ENCODE measurements at regions of chr4 and their contacts with region 1.

Region 1: DNA sequence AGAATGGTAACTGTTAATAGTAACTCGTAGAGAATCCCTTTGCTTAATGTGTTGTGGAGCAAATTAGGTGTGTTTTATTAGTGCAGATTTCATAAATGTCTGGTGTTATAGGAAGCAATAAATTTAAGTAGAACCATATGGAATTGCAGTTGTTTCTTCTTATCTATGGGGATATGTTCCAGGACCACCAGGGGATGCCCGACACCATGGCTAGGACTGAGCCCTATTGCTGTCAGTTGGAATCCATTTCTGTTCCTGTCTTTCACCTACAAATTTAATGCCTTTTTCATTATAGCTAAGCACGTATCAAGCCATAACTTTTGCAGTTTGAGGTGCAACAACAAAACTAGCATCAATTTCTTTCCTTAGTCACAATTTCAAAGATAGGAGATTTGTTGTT is 72.5 kb downstream of the DDIT4L start:
- DNase-seq: peak; percentile 41
- H3K4me3 ChIP-seq: no peak overlapping the region
- H3K27ac ChIP-seq: no peak overlapping the region
- H3K4me1 ChIP-seq: peaks cover 0 to 8% of the 10 kb centered on the region in 2 experiments; a peak in 2 of 4 replicates
- H3K27me3 ChIP-seq: no peaks in the 10 kb centered on the region
- CTCF ChIP-seq: no peak
- EP300 ChIP-seq: 0 out of 4 replicates have a peak, but pooled peaks of 1 of the 2 experiments have one; percentile 41
- RAD21 ChIP-seq: peak; percentile 86

Region 2: GRCh38 chr4:100130491-100130890 is 12.7 kb after region 1 on chr4:
- CTCF ChIA-PET with region 1: interaction called, 13 read pairs
- POLR2A ChIA-PET with region 1: no interaction called
- DNase-seq: no peak
- H3K4me3 ChIP-seq: no peak overlapping the region
- H3K27ac ChIP-seq: no peak overlapping the region
- H3K4me1 ChIP-seq: no peaks in the 10 kb centered on the region; a peak in 2 of 4 replicates
- H3K27me3 ChIP-seq: no peaks in the 10 kb centered on the region
- CTCF ChIP-seq: no peak
- EP300 ChIP-seq: no peak
- RAD21 ChIP-seq: no peak

Region 3: GRCh38 chr4:100149190-100149589 is 31.4 kb after region 1 on chr4:
- CTCF ChIA-PET with region 1: no interaction called
- POLR2A ChIA-PET with region 1: no interaction called
- DNase-seq: no peak
- H3K4me3 ChIP-seq: no peak overlapping the region
- H3K27ac ChIP-seq: no peak overlapping the region
- H3K4me1 ChIP-seq: no peaks in the 10 kb centered on the region; a peak in 1 of 4 replicates
- H3K27me3 ChIP-seq: no peaks in the 10 kb centered on the region
- CTCF ChIP-seq: no peak
- EP300 ChIP-seq: no peak
- RAD21 ChIP-seq: no peak

Region 4: GRCh38 chr4:100208964-100209363 is 91.2 kb after region 1 on chr4:
- CTCF ChIA-PET with region 1: no interaction called
- POLR2A ChIA-PET with region 1: no interaction called
- DNase-seq: no peak
- H3K4me3 ChIP-seq: no peak overlapping the region
- H3K27ac ChIP-seq: no peak overlapping the region
- H3K4me1 ChIP-seq: no peaks in the 10 kb centered on the region
- H3K27me3 ChIP-seq: no peaks in the 10 kb centered on the region
- CTCF ChIP-seq: no peak
- EP300 ChIP-seq: no peak
- RAD21 ChIP-seq: no peak